B cell (primary cell): ENCODE measurements at regions of chr11 and their contacts with region 1.

Region 1: DNA sequence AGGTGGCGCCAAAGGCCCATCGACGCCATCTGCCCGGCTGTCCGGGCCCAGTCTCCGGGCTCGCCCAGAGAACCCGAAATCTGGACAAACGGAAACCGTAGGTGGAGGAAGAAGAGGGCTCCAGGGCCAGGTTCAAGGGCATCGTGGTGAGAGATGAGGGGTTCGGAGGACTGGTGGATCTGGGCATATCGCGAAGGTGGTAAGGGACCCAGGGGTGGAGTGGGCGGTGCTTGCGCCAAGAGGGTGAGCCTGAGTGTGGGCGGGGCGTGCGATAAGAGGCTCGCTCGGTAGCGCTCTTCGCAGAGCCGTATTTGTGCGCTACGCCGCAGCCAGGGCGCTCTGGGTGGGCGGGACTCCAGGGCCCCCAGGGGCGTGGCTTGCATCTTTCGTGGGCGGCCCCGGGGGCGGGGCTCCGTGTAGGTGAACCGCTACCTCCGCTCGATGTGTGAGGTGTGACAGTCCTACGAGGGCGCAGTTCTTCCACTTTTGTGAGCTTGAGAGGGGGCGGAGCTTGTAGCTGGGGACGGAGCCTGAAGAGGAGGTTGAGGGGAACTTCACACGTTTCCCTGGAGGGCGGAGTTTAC is 4.8 kb downstream of the CD248 start:
- DNase-seq: peak; percentile 100
- ATAC-seq: peak; percentile 79
- H3K4me3 ChIP-seq: peak overlapping the region; percentile 30 to 72 (median 63)
- H3K4me3 Mint-ChIP-seq: peak overlapping the region; percentile 99
- H3K27ac ChIP-seq: peak overlapping the region; percentile 74 to 88
- H3K27ac Mint-ChIP-seq: peak overlapping the region; percentile 99
- H3K4me1 ChIP-seq: peaks cover 11 to 21% of the 10 kb centered on the region in 2 donors
- H3K4me1 Mint-ChIP-seq: peaks cover 28% of the 10 kb centered on the region
- H3K27me3 ChIP-seq: no peaks in the 10 kb centered on the region
- H3K27me3 Mint-ChIP-seq: peaks cover 3% of the 10 kb centered on the region
- CTCF ChIP-seq: peak; percentile 99

Region 2: DNA sequence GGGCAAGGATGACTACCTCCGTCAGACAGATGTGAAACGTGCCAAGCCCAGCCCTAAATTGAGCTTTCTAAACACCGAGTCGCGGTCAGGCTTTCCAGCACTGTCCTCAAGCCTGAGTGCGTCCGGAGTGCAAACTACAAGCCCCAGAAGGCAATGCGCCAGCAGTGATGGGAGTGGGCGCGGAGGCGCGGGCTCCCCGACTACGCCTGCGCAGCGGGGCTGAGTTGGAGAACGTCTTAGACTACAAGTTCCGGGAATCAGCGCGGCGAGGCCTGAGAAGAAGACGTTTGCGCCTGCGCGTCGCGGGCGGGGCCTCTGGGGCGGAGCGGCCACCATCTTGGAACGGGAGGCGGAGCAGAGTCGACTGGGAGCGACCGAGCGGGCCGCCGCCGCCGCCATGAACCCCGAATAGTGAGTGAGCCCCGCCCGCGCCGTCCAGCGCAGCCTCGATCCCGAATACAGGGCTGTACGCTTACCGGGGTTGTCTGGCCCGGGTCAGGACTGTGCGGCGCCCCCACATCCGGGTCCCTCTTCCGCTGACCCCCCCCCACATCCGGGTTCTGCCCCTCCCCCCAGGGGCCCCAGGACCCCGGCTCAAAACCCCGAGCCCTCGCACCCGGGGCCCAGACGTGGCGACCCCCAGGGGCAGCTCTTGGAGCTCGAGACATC is 43.6 kb before region 1 on chr11 and contains the start of gene RAB1B:
- CTCF ChIA-PET with region 1: interaction called, 7 read pairs
- POLR2A ChIA-PET with region 1: interaction called, 9 read pairs
- intact Hi-C with region 1: loop called (anchors 1 kb)
- DNase-seq: peak; percentile 100
- ATAC-seq: peak; percentile 77
- H3K4me3 ChIP-seq: peak within 1 kb of the TSS; percentile 83 to 100 (median 98)
- H3K4me3 Mint-ChIP-seq: peak within 1 kb of the TSS; percentile 95
- H3K27ac ChIP-seq: peak within 1 kb of the TSS; percentile 81 to 97
- H3K27ac Mint-ChIP-seq: peak within 1 kb of the TSS; percentile 96
- H3K4me1 ChIP-seq: peaks cover 14 to 27% of the 10 kb centered on the region in 2 donors
- H3K4me1 Mint-ChIP-seq: peaks cover 29% of the 10 kb centered on the region
- H3K27me3 ChIP-seq: no peaks in the 10 kb centered on the region
- H3K27me3 Mint-ChIP-seq: no peaks in the 10 kb centered on the region
- CTCF ChIP-seq: no peak
- total RNA-seq, gene RAB1B: 76.0 and 77.8 TPM in 2 replicates

Region 3: DNA sequence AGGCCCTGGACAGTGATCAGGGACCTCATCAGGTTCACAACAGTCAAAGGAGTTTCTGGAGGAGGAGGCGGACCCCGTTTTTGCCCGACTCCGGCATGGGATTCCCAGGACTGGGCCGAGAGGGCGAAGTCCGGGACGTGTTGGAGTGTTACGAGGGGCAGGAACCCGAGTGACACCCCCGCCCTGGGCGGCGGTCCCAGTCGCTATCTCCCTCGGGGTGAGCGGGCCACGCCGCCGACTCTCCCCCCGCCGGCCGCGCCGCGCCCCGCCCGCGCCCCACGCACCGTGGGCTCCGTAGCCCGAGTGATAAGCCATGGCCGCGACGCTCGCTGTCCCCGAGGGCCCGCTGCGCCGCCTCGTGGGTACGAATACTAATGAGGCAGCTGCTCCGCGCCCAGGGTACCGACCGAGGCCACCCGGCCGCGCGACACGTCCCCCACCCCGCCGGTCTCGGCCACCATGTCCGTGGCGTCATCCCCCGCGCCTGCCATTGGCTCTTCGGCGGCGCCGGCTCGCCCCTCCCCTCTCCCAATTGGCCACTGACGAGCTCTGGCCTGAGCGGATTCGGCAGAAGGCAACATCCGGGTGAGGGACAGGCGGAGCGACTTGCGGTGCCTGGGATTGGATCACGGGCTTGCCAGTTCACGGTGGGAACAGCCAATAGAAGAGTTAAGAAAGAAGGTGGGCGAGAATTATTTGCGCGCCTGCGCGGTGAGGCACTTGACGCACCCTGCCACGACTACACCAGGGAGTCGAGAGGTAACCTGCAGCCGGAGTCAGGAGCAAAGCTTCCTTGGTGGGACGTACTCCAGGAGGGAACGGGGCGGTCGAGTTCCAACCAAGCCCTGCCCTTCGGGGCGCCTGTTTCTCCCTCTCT is 23.1 kb before region 1 on chr11 and contains the start of gene YIF1A:
- CTCF ChIA-PET with region 1: interaction called, 19 read pairs
- POLR2A ChIA-PET with region 1: interaction called, 7 read pairs
- intact Hi-C with region 1: loop called (anchors 1 kb)
- DNase-seq: peak; percentile 99
- ATAC-seq: peak; percentile 93
- H3K4me3 ChIP-seq: peak within 1 kb of the TSS; percentile 53 to 92 (median 77)
- H3K4me3 Mint-ChIP-seq: peak within 1 kb of the TSS; percentile 95
- H3K27ac ChIP-seq: peak within 1 kb of the TSS; percentile 65 to 88
- H3K27ac Mint-ChIP-seq: peak within 1 kb of the TSS; percentile 94
- H3K4me1 ChIP-seq: peaks cover 34 to 42% of the 10 kb centered on the region in 2 donors
- H3K4me1 Mint-ChIP-seq: peaks cover 37% of the 10 kb centered on the region
- H3K27me3 ChIP-seq: peaks cover 2 to 33% (median 15%) of the 10 kb centered on the region in 4 experiments
- H3K27me3 Mint-ChIP-seq: peaks cover 12% of the 10 kb centered on the region
- CTCF ChIP-seq: peak; percentile 21
- total RNA-seq, gene YIF1A: 43.9 and 47.6 TPM in 2 replicates

Region 4: GRCh38 chr11:66336234-66337102 is 24.4 kb after region 1 on chr11 and contains the start of gene RIN1:
- CTCF ChIA-PET with region 1: interaction called, 101 read pairs
- POLR2A ChIA-PET with region 1: interaction called, 10 read pairs
- intact Hi-C with region 1: no loop called
- DNase-seq: peak; percentile 57
- ATAC-seq: peak; percentile 59
- H3K4me3 ChIP-seq: peak within 1 kb of the TSS in 3 of 5 experiments; percentile 19 to 50 (median 42)
- H3K4me3 Mint-ChIP-seq: peak within 1 kb of the TSS; percentile 84
- H3K27ac ChIP-seq: no peak within 1 kb of the TSS
- H3K27ac Mint-ChIP-seq: peak within 1 kb of the TSS; percentile 26
- H3K4me1 ChIP-seq: peaks cover 15 to 25% of the 10 kb centered on the region in 2 donors
- H3K4me1 Mint-ChIP-seq: peaks cover 21% of the 10 kb centered on the region
- H3K27me3 ChIP-seq: peaks cover 0 to 9% (median 3%) of the 10 kb centered on the region in 4 experiments
- H3K27me3 Mint-ChIP-seq: no peaks in the 10 kb centered on the region
- CTCF ChIP-seq: no peak
- total RNA-seq, gene RIN1: 1.1 and 1.7 TPM in 2 replicates

Region 5: DNA sequence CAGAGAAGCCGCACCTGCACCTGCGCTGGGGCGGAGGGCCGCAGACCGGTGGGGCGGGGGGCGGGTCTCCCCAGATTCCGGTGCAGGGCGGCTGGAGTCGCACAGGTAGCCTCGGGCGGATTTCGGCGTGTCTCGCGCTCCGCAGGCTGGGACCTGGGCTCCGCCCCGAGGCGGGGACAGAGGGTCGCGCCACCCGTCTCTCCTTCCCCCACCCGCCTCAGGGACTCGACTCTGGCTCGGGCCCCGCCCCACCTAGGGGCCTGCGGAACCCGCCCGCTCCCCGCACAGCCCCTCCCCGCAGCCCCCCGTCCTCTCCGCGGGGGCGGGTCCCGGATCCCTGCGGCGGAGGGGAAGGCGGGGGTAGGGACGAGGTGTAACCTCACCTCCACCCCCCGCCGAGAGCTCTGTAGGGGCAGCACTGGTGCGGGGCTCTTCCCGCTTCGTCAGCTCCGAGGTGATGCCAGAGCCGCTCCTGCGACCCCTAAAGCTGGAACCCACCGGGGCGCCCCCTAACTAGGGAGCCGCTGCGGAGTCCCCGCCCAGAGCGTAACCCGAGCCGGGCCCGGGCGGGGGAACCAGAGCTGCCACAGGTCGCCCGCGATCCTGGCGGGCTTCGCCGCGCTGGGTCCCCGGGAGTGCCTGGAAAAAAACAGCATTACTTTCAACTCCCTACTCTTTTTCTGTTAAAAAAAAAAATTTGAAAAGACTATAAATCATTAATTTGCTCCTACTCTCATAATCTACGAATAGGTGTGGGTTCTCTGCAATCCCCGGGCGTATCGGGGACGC is 59.8 kb after region 1 on chr11 and contains the start of gene SLC29A2:
- CTCF ChIA-PET with region 1: interaction called, 10 read pairs
- POLR2A ChIA-PET with region 1: interaction called, 6 read pairs
- intact Hi-C with region 1: loop called (anchors 1 kb)
- DNase-seq: peak; percentile 78
- ATAC-seq: peak; percentile 81
- H3K4me3 ChIP-seq: peak within 1 kb of the TSS; percentile 70 to 84 (median 77)
- H3K4me3 Mint-ChIP-seq: peak within 1 kb of the TSS; percentile 87
- H3K27ac ChIP-seq: peak within 1 kb of the TSS; percentile 76 to 79
- H3K27ac Mint-ChIP-seq: peak within 1 kb of the TSS; percentile 88
- H3K4me1 ChIP-seq: peaks cover 9 to 15% of the 10 kb centered on the region in 2 donors
- H3K4me1 Mint-ChIP-seq: peaks cover 10% of the 10 kb centered on the region
- H3K27me3 ChIP-seq: peaks cover 0 to 3% (median 0%) of the 10 kb centered on the region in 4 experiments
- H3K27me3 Mint-ChIP-seq: peaks cover 3% of the 10 kb centered on the region
- CTCF ChIP-seq: no peak
- total RNA-seq, gene SLC29A2: 18.5 and 20.1 TPM in 2 replicates

Region 6: DNA sequence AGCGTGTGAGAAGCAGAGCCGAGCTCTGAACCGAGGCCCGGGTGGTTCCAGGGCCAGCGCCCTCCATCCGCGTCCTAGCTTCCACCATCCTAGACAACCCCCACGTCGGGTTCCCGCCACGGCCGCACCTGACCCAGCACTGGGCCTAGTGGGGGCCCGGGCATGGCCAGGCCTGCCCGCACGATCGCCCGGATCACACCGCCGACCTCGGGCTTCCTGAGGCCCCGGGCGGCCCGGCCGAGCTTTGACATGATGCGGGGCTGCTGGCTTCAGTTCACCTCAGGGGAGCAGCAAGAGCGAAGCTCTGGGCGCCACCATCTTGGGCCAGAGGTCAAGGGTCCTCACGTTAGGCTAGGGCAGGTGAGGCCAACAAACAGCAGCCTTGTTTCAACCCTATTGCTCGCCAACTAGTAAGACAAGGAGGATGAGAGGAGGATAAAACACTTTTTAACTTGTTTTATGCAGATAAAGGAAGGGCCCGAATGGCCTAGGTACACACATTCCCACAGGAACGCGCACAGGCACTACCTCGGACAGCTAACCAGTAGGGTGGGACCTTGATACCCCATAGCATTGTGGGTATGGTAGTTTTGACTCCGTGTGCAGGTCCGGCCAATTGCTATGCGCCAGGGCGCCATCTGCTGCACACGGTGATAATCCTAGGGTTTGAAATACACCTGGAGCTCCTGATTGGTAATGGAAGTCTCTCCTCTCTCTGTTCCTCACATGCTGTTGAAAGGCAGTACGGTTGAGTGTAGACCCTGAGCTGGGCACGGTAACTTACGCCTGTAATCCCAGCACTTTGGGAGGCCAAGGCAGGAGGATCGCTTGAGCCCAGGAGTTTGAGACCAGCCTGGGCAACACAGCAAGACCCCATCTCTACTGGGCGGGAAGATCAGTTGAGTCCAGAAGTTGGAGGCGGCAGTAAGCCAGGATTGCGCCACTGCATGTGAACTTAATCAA is 126.7 kb after region 1 on chr11 and contains the start of gene MRPL11:
- CTCF ChIA-PET with region 1: interaction called, 14 read pairs
- POLR2A ChIA-PET with region 1: interaction called, 5 read pairs
- intact Hi-C with region 1: loop called (anchors 1 kb)
- DNase-seq: peak; percentile 95
- ATAC-seq: peak; percentile 98
- H3K4me3 ChIP-seq: peak within 1 kb of the TSS; percentile 71 to 98 (median 78)
- H3K4me3 Mint-ChIP-seq: peak within 1 kb of the TSS; percentile 93
- H3K27ac ChIP-seq: peak within 1 kb of the TSS; percentile 76 to 79
- H3K27ac Mint-ChIP-seq: peak within 1 kb of the TSS; percentile 98
- H3K4me1 ChIP-seq: peaks cover 6 to 10% of the 10 kb centered on the region in 2 donors
- H3K4me1 Mint-ChIP-seq: peaks cover 14% of the 10 kb centered on the region
- H3K27me3 ChIP-seq: no peaks in the 10 kb centered on the region
- H3K27me3 Mint-ChIP-seq: no peaks in the 10 kb centered on the region
- CTCF ChIP-seq: peak; percentile 77
- total RNA-seq, gene MRPL11: 26.7 and 29.2 TPM in 2 replicates